Natural killer cell (primary cell): ENCODE measurements at regions of chr1 and their contacts with region 1.

Region 1: GRCh38 chr1:160085686-160086455 is 4.5 kb downstream of the KCNJ9 start:
- DNase-seq: peak; percentile 64 to 87
- ATAC-seq: peak; percentile 61 to 81 (median 70)
- H3K4me3 ChIP-seq: no peak overlapping the region
- H3K4me3 Mint-ChIP-seq: no peak overlapping the region
- H3K27ac ChIP-seq: no peak overlapping the region
- H3K27ac Mint-ChIP-seq: no peak overlapping the region
- H3K4me1 ChIP-seq: peaks cover 10% of the 10 kb centered on the region
- H3K4me1 Mint-ChIP-seq: peaks cover 11 to 19% of the 10 kb centered on the region in 2 donors
- H3K27me3 ChIP-seq: peaks cover 18% of the 10 kb centered on the region
- H3K27me3 Mint-ChIP-seq: peaks cover 23 to 24% of the 10 kb centered on the region in 2 donors
- CTCF ChIP-seq: peak; percentile 63

Region 2: GRCh38 chr1:159936273-159936904 is 149.5 kb before region 1 on chr1:
- intact Hi-C with region 1: loop called (anchors 5 kb)
- DNase-seq: peak; percentile 83 to 89
- ATAC-seq: peak; percentile 80 to 99 (median 94)
- H3K4me3 ChIP-seq: no peak overlapping the region
- H3K4me3 Mint-ChIP-seq: no peak overlapping the region
- H3K27ac ChIP-seq: no peak overlapping the region
- H3K27ac Mint-ChIP-seq: no peak overlapping the region
- H3K4me1 ChIP-seq: peaks cover 24% of the 10 kb centered on the region
- H3K4me1 Mint-ChIP-seq: peaks cover 0 to 7% of the 10 kb centered on the region in 2 donors
- H3K27me3 ChIP-seq: no peaks in the 10 kb centered on the region
- H3K27me3 Mint-ChIP-seq: peaks cover 20 to 22% of the 10 kb centered on the region in 2 donors
- CTCF ChIP-seq: peak; percentile 97

Region 3: GRCh38 chr1:159996653-159997052 is 89.2 kb before region 1 on chr1:
- intact Hi-C with region 1: no loop called
- DNase-seq: no peak
- ATAC-seq: no peak
- H3K4me3 ChIP-seq: no peak overlapping the region
- H3K4me3 Mint-ChIP-seq: no peak overlapping the region
- H3K27ac ChIP-seq: no peak overlapping the region
- H3K27ac Mint-ChIP-seq: no peak overlapping the region
- H3K4me1 ChIP-seq: no peaks in the 10 kb centered on the region
- H3K4me1 Mint-ChIP-seq: no peaks in the 10 kb centered on the region
- H3K27me3 ChIP-seq: peaks cover 4% of the 10 kb centered on the region
- H3K27me3 Mint-ChIP-seq: peaks cover 31 to 38% of the 10 kb centered on the region in 2 donors
- CTCF ChIP-seq: no peak

Region 4: GRCh38 chr1:160098852-160099561 is 13.1 kb after region 1 on chr1:
- intact Hi-C with region 1: loop called (anchors 2 kb)
- DNase-seq: peak; percentile 89 to 97
- ATAC-seq: peak; percentile 85 to 93 (median 88)
- H3K4me3 ChIP-seq: peak overlapping the region; percentile 39
- H3K4me3 Mint-ChIP-seq: peak overlapping the region; percentile 78
- H3K27ac ChIP-seq: peak overlapping the region; percentile 87
- H3K27ac Mint-ChIP-seq: peak overlapping the region; percentile 84 to 89
- H3K4me1 ChIP-seq: peaks cover 45% of the 10 kb centered on the region
- H3K4me1 Mint-ChIP-seq: peaks cover 39 to 56% of the 10 kb centered on the region in 2 donors
- H3K27me3 ChIP-seq: no peaks in the 10 kb centered on the region
- H3K27me3 Mint-ChIP-seq: peaks cover 0 to 2% of the 10 kb centered on the region in 2 donors
- CTCF ChIP-seq: no peak